ENCODE measurements at regions of chr2 and their contacts with region 1.

Region 1: DNA sequence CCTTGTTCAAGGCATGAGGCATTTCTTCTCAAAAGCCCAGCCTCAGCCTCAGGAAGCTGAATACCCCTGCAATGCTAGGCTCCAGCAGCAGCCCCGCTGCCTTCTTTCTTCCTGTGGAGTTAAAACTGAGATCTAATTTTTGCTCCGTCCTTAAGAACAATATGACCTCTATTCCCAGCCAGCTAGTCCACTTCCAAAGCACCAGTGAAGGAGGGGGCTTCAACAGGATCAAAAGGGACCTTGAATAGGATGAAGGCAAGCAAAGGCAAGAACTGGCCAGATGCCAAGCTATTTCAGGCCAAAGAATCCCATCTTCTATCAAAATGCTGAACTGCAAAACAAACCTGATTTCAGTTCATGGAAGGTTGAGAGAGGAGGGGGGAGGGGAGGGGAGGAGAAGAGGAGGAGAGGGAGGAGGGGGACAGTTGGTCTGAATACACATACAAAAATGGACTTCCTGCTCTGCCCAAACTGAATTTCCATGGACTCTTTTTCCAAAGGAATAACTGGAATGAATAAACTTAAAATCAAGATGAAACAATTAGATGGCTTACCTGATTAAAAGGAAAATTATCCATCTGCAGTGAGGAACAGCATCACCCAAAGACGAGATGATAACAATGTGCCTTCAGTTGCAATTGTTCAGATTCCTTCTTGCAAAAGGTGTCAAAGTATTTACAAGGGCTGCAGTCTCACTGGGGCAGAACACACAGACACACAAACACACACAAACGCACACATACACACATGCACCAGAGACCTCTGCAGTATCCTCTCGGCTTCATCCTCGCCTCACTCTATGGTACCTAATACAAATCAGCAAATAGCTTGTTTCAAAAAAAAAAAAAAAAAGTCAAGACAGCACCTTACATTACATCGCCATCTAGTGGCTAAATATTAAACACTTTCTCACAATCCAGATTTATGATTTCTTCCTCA is at the start of gene SCN1A:
- DNase-seq: peak in 1 of 3 donors; percentile 8
- ATAC-seq: peak; percentile 31
- H3K4me3 ChIP-seq: no peak within 1 kb of the TSS
- H3K4me1 ChIP-seq: no peaks in the 10 kb centered on the region
- CTCF ChIP-seq: no peak
- total RNA-seq, gene SCN1A: 0.82 TPM in 1 of 3 donors, not detected in the others

Region 2: DNA sequence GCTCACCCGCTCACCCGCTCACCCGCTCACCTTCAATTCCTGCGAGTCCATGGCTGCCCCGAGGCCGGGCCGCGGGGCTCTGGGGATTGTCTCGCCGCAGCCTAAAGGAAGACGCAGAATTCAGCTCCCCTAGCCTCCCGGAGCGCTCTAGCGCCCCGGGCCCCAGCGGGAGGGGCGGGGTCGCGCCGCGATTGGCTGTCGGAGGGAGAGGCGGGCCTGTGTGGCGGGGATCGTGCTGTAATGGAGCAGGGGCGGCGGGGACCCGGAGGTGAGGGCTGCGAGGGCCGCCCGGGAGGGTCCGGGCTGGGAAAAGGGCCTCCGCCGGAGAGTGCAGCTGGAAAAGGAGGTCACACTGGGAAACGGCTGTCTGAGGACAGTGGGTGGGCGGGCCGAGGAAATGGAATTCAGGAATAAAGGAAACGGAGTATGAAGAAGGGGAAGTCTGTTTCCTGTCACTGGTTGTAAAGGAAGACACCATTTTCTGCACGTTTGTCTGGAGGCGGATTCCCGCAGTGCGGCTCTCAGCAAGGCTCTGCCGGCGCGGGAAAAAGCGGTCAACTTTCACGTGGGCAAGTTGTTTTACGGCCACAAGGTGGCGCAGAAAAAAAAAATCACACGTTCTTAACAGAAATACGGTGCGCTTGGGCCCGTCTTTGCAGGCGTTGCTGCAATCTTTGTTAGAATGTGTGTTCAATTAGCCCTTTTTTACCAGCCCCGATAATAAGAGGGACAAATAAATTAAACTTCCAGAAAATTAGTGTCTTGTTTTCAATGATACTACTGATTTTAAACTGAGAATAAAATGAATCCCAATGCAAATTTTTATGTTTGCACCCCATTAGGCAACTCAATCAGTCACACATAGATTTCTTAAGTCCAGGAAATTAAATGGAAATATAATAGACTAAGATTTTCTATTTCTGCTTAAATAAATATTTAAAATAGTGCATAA is 173.6 kb before region 1 on chr2 and contains the start of gene TTC21B:
- intact Hi-C with region 1: loop called in 1 of 2 experiments (anchors 10 kb)
- DNase-seq: peak; percentile 94 to 97 (median 95)
- ATAC-seq: peak; percentile 99
- H3K4me3 ChIP-seq: peak within 1 kb of the TSS; percentile 57
- H3K4me1 ChIP-seq: peaks cover 19% of the 10 kb centered on the region
- CTCF ChIP-seq: peak; percentile 64
- total RNA-seq, gene TTC21B: 10.4 to 22.2 (median 17.2) TPM

Region 3: DNA sequence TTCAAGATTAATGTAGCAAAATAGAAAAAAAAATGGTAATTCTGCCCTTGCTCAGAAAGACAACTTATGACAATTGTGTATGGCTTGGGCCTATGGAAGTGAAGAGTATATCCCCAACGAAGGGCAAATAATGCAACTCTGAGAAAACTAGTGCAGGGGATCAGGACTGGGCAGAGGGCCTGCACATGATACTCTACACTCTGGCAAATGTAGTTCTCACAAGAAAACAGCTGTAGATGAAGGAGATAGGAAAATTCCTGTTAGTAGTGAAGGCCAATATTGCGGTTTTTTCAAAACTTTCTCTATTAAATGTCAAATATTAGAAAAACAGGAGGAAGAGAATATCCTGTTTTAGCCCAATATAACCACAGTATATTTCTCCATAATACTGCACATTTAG is 170.5 kb after region 1 on chr2:
- intact Hi-C with region 1: no loop called
- DNase-seq: no peak
- ATAC-seq: no peak
- H3K4me3 ChIP-seq: no peak overlapping the region
- H3K4me1 ChIP-seq: no peaks in the 10 kb centered on the region
- CTCF ChIP-seq: no peak

Measured in mucosa of descending colon (tissue), 3 donors.